Stomach (tissue), 19 donors: ENCODE measurements at regions of chr12 and their contacts with region 1.

Region 1: DNA sequence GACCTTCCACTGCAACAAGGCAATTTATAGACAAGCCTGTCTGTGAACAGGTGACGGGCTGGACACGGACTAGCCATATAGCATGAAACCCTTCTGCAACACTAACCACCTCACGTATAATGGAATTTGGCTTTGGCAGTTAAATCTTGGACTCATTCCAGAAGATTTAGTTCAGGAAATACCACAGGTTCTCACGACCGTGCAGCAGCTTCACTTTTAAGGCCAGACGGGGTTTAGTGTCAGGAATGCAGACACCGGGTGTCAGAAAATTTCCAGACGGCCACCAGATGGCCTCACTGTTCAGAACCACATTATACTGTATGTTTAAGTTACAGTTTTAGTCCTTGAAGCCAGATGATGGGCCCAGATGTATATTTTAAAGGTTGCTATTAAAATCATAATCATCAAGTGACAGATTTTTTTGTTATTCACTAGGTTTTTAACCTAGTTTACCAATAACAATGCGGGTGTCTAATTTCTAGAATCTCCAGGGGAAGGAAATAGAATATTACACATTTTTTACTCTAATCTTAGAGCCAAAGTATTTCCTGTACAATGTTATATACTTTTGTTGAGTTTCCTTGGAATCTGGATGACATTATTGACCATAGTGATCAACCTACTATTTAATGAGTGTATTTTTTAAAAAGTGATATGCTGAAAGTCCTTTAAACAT is 90.5 kb upstream of the TMPO start:
- DNase-seq: peak; percentile 64 to 88
- H3K4me3 ChIP-seq: no peak overlapping the region
- H3K27ac ChIP-seq: no peak overlapping the region
- H3K4me1 ChIP-seq: peaks cover 0 to 15% (median 5%) of the 10 kb centered on the region in 4 donors
- H3K27me3 ChIP-seq: no peaks in the 10 kb centered on the region
- CTCF ChIP-seq: peak in 5 of 7 experiments; percentile 50 to 62 (median 60)
- EP300 ChIP-seq: no peak
- POLR2A ChIP-seq: no peak

Region 2: DNA sequence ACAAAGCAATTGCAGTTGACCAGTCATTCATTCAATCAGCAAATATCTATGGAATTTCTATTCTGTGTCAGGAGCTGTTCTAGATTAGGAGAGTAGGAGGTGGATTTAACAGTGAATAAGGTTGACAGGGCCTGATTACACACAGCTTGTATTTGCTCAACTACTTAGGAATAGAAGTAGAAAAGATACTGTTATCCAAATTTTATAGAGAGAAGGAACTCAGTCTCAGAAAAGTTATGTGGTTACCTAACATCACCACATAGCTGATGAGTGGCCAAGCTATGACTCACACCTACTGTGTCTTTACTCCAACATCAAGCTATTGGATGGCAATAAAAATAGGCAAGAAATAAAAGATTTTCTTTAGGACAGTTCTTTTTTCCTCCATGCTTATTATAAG is 587.5 kb before region 1 on chr12:
- intact Hi-C with region 1: no loop called
- DNase-seq: peak in 1 of 2 donors; percentile 19
- H3K4me3 ChIP-seq: no peak overlapping the region
- H3K27ac ChIP-seq: no peak overlapping the region
- H3K4me1 ChIP-seq: no peaks in the 10 kb centered on the region
- H3K27me3 ChIP-seq: no peaks in the 10 kb centered on the region
- CTCF ChIP-seq: no peak
- EP300 ChIP-seq: no peak
- POLR2A ChIP-seq: no peak

Region 3: GRCh38 chr12:97899956-97900355 is 524.9 kb before region 1 on chr12:
- intact Hi-C with region 1: no loop called
- DNase-seq: no peak
- H3K4me3 ChIP-seq: no peak overlapping the region
- H3K27ac ChIP-seq: no peak overlapping the region
- H3K4me1 ChIP-seq: no peaks in the 10 kb centered on the region
- H3K27me3 ChIP-seq: no peaks in the 10 kb centered on the region
- CTCF ChIP-seq: no peak
- EP300 ChIP-seq: no peak
- POLR2A ChIP-seq: no peak

Region 4: DNA sequence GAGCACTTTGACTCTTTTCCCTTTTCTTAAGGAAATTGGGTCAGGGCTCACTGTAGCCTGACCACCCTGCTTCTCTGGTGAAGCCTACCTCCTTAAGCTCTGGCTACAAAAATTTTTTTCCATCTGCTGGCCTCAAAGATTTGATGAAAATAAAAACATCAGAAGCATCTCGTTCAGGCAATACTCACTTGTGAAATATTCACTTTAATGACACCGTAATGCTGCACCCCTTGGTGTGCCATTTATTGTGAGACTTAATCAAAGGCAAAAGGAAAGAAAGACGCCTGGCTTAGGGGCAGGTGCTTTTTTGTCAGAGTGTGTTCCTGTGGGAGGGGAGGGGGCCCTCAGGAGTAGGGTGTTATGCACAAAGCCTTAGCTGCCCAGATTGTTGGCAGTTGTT is 64.5 kb before region 1 on chr12:
- intact Hi-C with region 1: no loop called
- DNase-seq: no peak
- H3K4me3 ChIP-seq: no peak overlapping the region
- H3K27ac ChIP-seq: no peak overlapping the region
- H3K4me1 ChIP-seq: no peaks in the 10 kb centered on the region
- H3K27me3 ChIP-seq: peaks cover 0 to 4% (median 0%) of the 10 kb centered on the region in 3 donors
- CTCF ChIP-seq: no peak
- EP300 ChIP-seq: no peak
- POLR2A ChIP-seq: no peak

Region 5: DNA sequence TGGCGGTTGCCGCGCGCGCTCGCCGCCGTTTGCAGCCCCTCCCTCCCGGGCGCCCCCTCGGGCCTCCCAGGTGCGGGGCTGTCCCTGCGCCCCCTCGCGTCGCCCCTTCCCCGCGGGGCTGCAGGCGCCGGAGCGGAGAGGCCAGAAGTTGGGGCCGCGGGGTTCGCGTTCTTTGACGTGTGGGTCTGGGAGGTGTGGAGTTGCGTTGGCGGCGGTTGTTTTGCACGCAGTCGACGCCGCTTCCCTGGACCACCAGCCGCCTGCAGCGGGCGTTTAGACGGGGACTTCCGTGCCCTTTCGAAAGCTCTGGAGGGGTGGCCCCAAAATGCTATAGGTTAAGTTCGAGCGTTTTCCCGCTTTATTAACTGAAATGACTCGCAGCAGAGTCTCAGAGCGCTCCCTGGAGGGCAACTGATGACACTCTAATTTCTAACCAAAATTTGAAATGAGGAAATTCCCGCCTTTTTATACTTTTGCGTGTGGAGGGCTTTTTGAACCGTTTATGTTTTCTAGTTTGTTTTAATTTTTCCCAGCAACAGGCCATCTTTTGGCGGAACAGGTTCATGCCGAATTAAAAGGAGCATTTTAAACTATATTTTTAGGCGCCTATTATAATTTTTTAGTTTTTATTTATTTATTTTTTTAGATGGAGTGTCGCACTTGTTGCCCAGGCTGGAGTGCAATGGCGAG is 91.5 kb after region 1 on chr12:
- intact Hi-C with region 1: loop called (anchors 10 kb)
- DNase-seq: peak; percentile 71 to 95
- H3K4me3 ChIP-seq: peak overlapping the region; percentile 81 to 99 (median 92)
- H3K27ac ChIP-seq: peak overlapping the region; percentile 92 to 98 (median 94)
- H3K4me1 ChIP-seq: peaks cover 27 to 67% (median 52%) of the 10 kb centered on the region in 4 donors
- H3K27me3 ChIP-seq: no peaks in the 10 kb centered on the region
- CTCF ChIP-seq: peak in 5 of 7 experiments; percentile 45 to 69 (median 56)
- EP300 ChIP-seq: no peak
- POLR2A ChIP-seq: no peak